AG04450 (cell line): ENCODE measurements at regions of chr15 and their contacts with region 1.

Region 1: GRCh38 chr15:49235446-49236124 is 65.5 kb downstream of the GALK2 start:
- DNase-seq: peak; percentile 77
- H3K4me3 ChIP-seq: no peak overlapping the region
- H3K27ac ChIP-seq: no peak overlapping the region
- H3K27me3 ChIP-seq: no peaks in the 10 kb centered on the region
- CTCF ChIP-seq: peak; percentile 76

Region 2: GRCh38 chr15:50051803-50052419 is 816.3 kb after region 1 on chr15:
- CTCF ChIA-PET with region 1: interaction called, 41 read pairs
- POLR2A ChIA-PET with region 1: no interaction called
- DNase-seq: peak; percentile 61
- H3K4me3 ChIP-seq: no peak overlapping the region
- H3K27ac ChIP-seq: no peak overlapping the region
- H3K27me3 ChIP-seq: no peaks in the 10 kb centered on the region
- CTCF ChIP-seq: peak; percentile 85

Region 3: DNA sequence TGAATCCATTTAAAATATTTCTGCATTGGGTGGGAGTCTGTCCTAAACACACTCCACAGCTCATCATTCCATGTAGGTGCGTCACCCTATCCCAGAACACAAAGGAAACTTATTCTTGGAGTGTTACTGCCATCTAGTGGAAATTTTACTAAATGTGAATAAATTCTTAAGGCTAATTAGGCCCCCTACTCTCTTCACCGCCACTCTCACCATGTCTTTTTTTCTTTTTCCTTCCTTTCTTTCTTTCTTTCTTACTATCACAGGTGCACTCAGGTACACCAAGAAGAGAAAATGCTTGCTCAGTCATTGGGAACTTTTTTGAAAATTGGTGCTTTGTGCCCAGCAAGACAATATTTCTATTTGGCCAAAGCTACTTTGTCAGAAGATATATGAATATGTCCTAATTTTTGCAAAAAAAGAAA is 909.9 kb after region 1 on chr15:
- CTCF ChIA-PET with region 1: interaction called, 18 read pairs
- POLR2A ChIA-PET with region 1: no interaction called
- DNase-seq: peak; percentile 65
- H3K4me3 ChIP-seq: no peak overlapping the region
- H3K27ac ChIP-seq: no peak overlapping the region
- H3K27me3 ChIP-seq: no peaks in the 10 kb centered on the region
- CTCF ChIP-seq: peak; percentile 46